ENCODE measurements at regions of chr10 and their contacts with region 1.

Region 1: GRCh38 chr10:89295597-89295996 is 6.2 kb upstream of the IFIT2 start:
- DNase-seq: no peak
- ATAC-seq: no peak
- H3K4me3 ChIP-seq: no peak overlapping the region
- H3K4me3 Mint-ChIP-seq: peak overlapping the region in 1 of 10 donors; percentile 2
- H3K27ac ChIP-seq: no peak overlapping the region
- H3K27ac Mint-ChIP-seq: peak overlapping the region in 1 of 9 donors; percentile 67
- H3K4me1 ChIP-seq: peaks cover 0 to 8% of the 10 kb centered on the region in 2 donors
- H3K4me1 Mint-ChIP-seq: peaks cover 11 to 40% (median 23%) of the 10 kb centered on the region in 7 donors
- H3K27me3 ChIP-seq: no peaks in the 10 kb centered on the region
- H3K27me3 Mint-ChIP-seq: peaks cover 0 to 25% (median 0%) of the 10 kb centered on the region in 5 donors

Region 2: DNA sequence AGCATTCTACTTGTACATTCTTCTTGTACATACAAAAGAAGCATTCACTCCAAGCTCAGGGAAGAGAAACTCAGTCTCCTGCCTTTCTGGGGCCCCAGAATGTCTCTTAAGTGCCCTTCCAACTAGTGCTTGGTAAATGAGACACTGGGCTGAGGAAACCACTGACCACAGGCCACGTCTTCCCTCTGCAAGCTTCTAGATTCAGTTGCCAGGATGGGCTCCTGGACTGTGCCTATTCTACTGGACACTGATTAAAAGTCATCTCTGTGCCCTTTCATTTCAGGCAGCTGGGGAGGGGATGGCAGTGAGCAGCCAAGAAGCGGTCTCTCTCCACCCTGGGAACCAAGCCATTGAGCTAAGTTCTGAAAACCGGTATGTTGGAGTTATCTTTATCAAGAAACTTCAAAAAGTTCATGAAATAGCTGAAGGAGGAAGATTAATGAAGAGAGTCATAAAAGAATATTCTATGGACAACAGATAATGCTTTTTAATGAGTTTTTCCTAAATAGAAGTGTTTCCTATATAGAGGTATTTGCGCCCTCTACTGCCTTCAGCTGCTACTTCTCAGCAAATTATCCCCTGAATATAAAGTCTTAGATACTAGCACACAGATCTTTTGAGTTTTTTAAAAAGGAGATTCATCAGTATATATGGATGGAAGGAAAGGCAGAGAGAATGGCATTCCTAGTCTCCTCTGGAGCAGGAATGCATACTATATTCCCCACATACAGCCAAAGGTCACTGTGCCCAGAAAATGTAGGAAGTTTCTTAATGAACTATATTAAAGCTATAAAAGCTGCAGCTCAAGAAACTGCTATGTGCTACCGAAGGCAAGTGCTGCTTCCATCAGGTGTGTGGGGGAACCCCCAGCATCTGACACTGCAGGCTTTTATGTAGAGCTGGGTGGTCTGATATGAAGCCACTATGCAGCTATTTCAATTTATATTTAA is 73.8 kb after region 1 on chr10:
- CTCF ChIA-PET with region 1: interaction called, 11 read pairs
- POLR2A ChIA-PET with region 1: interaction called, 15 read pairs
- intact Hi-C with region 1: loop called (anchors 1 kb)
- DNase-seq: peak in 6 of 9 donors; percentile 12 to 40 (median 24)
- ATAC-seq: peak; percentile 62
- H3K4me3 ChIP-seq: no peak overlapping the region
- H3K4me3 Mint-ChIP-seq: no peak overlapping the region
- H3K27ac ChIP-seq: no peak overlapping the region
- H3K27ac Mint-ChIP-seq: no peak overlapping the region
- H3K4me1 ChIP-seq: peaks cover 0 to 7% of the 10 kb centered on the region in 2 donors
- H3K4me1 Mint-ChIP-seq: peaks cover 0 to 18% (median 14%) of the 10 kb centered on the region in 7 donors
- H3K27me3 ChIP-seq: no peaks in the 10 kb centered on the region
- H3K27me3 Mint-ChIP-seq: peaks cover 0 to 37% (median 0%) of the 10 kb centered on the region in 5 donors